Gastrocnemius medialis (tissue), 4 donors: ENCODE measurements at regions of chr20 and their contacts with region 1.

Region 1: GRCh38 chr20:62980970-62981369 is 25.8 kb downstream of the BHLHE23 start:
- DNase-seq: no peak
- ATAC-seq: no peak
- H3K4me3 ChIP-seq: no peak overlapping the region
- H3K27ac ChIP-seq: no peak overlapping the region
- H3K4me1 ChIP-seq: no peaks in the 10 kb centered on the region
- H3K27me3 ChIP-seq: peaks cover 62 to 87% (median 78%) of the 10 kb centered on the region in 3 donors
- CTCF ChIP-seq: no peak
- POLR2A ChIP-seq: no peak

Region 2: GRCh38 chr20:64099880-64100565 is 1119.1 kb after region 1 on chr20:
- in situ Hi-C with region 1: no loop called
- intact Hi-C with region 1: loop called (anchors 10 kb)
- DNase-seq: no peak
- ATAC-seq: no peak
- H3K4me3 ChIP-seq: no peak overlapping the region
- H3K27ac ChIP-seq: no peak overlapping the region
- H3K4me1 ChIP-seq: peaks cover 0 to 10% of the 10 kb centered on the region in 2 donors
- H3K27me3 ChIP-seq: peaks cover 35 to 49% (median 41%) of the 10 kb centered on the region in 3 donors
- CTCF ChIP-seq: no peak
- POLR2A ChIP-seq: no peak